Activated T-helper 2 cell treated with anti-CD3 and anti-CD28 coated beads, Interferon-gamma antibody, Interleukin-2, Interleukin-4, amounts not matched to agents 10 μg/mL and 5 μg/mL and 100 μg/mL, durations not matched to agents 14 hours and 24 hours and 36 hours (primary cell): ENCODE measurements at regions of chr4 and their contacts with region 1.

Region 1: GRCh38 chr4:89434364-89434988 is 126.9 kb upstream of the GPRIN3 start:
- DNase-seq: no peak
- H3K4me3 Mint-ChIP-seq: no peak overlapping the region
- H3K27ac Mint-ChIP-seq: no peak overlapping the region
- H3K4me1 Mint-ChIP-seq: peaks cover 17% of the 10 kb centered on the region
- H3K27me3 Mint-ChIP-seq: peaks cover 3% of the 10 kb centered on the region

Region 2: DNA sequence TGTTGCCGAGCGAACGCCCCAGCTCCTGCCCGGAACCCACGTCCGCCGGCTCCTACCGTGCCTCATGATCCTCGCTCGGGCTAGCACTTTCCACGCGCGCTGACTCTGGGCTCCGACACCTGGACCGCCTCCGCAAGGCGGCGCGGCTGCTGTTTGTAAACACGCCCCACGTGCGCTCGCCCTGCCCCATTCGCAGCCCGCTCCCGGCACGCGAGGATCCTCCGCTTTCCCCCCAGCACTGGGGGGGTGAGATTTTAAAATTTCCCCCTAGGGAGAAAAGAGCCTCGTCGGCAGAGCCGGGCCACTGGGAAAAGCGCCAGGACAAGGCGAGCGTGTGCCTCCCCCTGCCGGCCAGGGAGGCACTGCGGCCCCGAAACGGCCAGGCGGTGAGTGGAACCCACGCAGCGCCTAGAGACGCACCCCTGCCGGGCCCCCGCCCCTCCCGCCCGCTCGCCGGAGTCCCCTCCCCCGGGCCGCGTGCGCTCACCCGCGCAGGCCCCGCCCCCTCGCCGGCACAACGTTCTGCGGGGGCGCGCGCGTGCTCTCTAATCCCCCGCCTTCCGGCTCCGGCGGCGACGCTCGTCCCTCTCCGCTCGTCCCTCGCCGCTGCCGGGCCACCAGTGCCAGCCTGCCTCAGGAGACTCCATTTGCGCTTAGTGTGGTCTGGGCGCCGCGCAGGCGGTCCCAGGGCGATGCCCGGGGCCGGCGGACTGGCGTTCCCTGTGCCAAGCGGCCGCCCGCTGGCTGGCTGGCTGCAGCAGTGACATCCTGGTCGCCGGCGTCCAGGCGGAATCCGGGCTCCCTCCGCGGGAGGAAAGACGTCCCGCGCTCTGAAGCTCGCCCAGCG is 323.3 kb before region 1 on chr4 and contains the start of gene TIGD2:
- intact Hi-C with region 1: loop called (anchors 1 kb)
- DNase-seq: peak; percentile 80
- H3K4me3 Mint-ChIP-seq: peak within 1 kb of the TSS; percentile 84
- H3K27ac Mint-ChIP-seq: peak within 1 kb of the TSS; percentile 42
- H3K4me1 Mint-ChIP-seq: peaks cover 17% of the 10 kb centered on the region
- H3K27me3 Mint-ChIP-seq: peaks cover 22% of the 10 kb centered on the region
- total RNA-seq, gene TIGD2: 2.6 and 3.0 TPM in 2 replicates

Region 3: DNA sequence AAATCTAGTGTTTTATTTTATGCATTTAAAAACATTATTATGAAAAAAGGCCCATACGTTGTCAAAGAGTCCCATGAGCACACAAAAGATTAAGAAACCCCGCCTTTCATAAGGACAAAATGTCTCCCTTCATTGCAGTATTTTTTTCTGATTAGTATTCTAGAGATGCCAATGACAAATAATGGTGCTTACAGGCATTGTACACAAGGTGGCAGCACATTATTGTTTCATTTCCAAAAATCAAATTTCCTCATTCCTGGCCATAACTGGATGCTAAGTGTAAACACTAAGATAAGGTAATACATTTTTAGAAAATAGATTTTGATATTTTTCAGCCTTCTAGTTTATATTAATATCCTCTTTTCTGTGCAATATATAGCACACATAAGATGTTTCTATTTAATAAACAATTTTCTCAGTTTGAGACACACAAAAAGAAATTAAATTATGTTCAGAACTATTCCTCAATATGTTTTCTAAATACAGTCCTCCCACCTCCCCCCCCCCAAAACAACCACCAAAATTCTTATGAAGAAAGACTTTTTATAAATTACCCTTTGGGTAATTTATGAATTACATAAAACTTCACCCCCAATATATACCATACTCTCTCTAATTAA is 275.5 kb before region 1 on chr4:
- intact Hi-C with region 1: loop called (anchors 1 kb)
- DNase-seq: no peak
- H3K4me3 Mint-ChIP-seq: no peak overlapping the region
- H3K27ac Mint-ChIP-seq: no peak overlapping the region
- H3K4me1 Mint-ChIP-seq: no peaks in the 10 kb centered on the region
- H3K27me3 Mint-ChIP-seq: peaks cover 16% of the 10 kb centered on the region

Region 4: GRCh38 chr4:89226665-89227574 is 207.6 kb before region 1 on chr4:
- intact Hi-C with region 1: loop called (anchors 1 kb)
- DNase-seq: peak; percentile 57
- H3K4me3 Mint-ChIP-seq: no peak overlapping the region
- H3K27ac Mint-ChIP-seq: no peak overlapping the region
- H3K4me1 Mint-ChIP-seq: peaks cover 12% of the 10 kb centered on the region
- H3K27me3 Mint-ChIP-seq: no peaks in the 10 kb centered on the region

Region 5: GRCh38 chr4:89254847-89255246 is 179.6 kb before region 1 on chr4:
- intact Hi-C with region 1: loop called (anchors 1 kb)
- DNase-seq: peak; percentile 16
- H3K4me3 Mint-ChIP-seq: no peak overlapping the region
- H3K27ac Mint-ChIP-seq: peak overlapping the region; percentile 39
- H3K4me1 Mint-ChIP-seq: peaks cover 54% of the 10 kb centered on the region
- H3K27me3 Mint-ChIP-seq: no peaks in the 10 kb centered on the region

Region 6: DNA sequence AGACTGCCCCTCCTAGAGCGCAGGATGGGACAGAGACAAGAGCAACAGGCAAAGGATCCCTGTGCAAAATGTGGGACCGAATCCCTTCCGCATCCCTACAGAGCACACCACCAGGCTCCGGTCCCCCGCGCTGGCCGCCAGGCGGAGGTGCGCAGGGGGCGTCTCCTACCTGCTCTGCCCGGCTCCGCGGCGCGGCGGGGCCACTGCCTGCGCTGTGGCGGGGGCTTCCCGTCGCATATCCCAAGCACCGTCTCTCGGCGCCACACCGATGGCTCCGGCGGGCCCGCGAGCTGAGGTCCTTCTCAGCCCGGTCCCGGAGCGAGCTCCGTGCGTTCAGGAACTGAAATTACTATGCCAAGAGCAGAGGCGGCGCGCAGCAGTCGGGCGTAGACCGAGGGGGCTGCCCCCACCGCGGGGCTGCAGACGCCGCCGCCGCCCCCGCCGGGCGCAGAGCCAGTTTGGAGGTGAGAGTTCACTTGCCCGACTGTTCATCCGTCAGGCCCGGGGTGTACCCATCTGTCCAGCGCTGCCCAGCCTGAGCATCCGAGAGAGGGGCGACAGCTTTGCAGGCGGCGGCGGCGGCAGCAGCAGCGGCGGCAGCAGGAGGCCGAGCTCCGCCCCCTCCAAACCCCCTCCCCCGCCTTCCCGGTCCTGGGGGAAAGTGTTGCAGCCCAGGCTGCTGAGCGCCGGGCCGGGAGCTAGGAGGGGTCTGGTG is 126.9 kb before region 1 on chr4 and contains the start of gene GPRIN3:
- intact Hi-C with region 1: loop called (anchors 5 kb)
- DNase-seq: peak; percentile 44
- H3K4me3 Mint-ChIP-seq: peak within 1 kb of the TSS; percentile 97
- H3K27ac Mint-ChIP-seq: peak within 1 kb of the TSS; percentile 87
- H3K4me1 Mint-ChIP-seq: peaks cover 60% of the 10 kb centered on the region
- H3K27me3 Mint-ChIP-seq: no peaks in the 10 kb centered on the region
- total RNA-seq, gene GPRIN3: 10.7 and 11.6 TPM in 2 replicates

Region 7: DNA sequence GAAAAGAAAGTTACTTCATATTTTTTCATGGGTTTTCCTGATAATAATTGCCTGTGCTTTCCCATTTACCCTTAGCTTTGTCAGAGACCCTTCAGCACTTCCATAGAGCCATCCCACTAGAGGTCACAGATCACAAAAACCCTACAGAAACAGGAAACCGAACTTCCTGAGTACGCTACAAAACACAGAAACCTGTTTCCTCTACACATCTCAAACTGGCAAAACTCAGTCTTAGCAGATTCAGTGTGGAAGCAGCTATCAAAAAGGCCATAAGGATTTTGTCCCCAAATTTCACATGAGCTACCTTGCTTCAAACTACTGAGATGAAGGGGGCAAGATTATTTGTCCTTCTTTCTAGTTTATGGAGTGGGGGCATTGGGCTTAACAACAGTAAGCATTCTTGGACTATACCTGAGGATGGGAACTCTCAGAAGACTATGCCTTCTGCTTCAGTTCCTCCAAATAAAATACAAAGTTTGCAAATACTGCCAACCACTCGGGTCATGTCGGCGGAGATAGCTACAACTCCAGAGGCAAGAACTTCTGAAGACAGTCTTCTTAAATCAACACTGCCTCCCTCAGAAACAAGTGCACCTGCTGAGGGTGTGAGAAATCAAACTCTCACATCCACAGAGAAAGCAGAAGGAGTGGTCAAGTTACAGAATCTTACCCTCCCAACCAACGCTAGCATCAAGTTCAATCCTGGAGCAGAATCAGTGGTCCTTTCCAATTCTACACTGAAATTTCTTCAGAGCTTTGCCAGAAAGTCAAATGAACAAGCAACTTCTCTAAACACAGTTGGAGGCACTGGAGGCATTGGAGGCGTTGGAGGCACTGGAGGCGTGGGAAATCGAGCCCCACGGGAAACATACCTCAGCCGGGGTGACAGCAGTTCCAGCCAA is 460.4 kb after region 1 on chr4 and contains the start of gene MMRN1:
- intact Hi-C with region 1: loop called (anchors 2 kb)
- DNase-seq: no peak
- H3K4me3 Mint-ChIP-seq: no peak within 1 kb of the TSS
- H3K27ac Mint-ChIP-seq: no peak within 1 kb of the TSS
- H3K4me1 Mint-ChIP-seq: peaks cover 14% of the 10 kb centered on the region
- H3K27me3 Mint-ChIP-seq: peaks cover 7% of the 10 kb centered on the region
- total RNA-seq, gene MMRN1: not detected in 2 replicates